Mucosa of descending colon (tissue), 3 donors: ENCODE measurements at regions of chr2 and their contacts with region 1.

Region 1: DNA sequence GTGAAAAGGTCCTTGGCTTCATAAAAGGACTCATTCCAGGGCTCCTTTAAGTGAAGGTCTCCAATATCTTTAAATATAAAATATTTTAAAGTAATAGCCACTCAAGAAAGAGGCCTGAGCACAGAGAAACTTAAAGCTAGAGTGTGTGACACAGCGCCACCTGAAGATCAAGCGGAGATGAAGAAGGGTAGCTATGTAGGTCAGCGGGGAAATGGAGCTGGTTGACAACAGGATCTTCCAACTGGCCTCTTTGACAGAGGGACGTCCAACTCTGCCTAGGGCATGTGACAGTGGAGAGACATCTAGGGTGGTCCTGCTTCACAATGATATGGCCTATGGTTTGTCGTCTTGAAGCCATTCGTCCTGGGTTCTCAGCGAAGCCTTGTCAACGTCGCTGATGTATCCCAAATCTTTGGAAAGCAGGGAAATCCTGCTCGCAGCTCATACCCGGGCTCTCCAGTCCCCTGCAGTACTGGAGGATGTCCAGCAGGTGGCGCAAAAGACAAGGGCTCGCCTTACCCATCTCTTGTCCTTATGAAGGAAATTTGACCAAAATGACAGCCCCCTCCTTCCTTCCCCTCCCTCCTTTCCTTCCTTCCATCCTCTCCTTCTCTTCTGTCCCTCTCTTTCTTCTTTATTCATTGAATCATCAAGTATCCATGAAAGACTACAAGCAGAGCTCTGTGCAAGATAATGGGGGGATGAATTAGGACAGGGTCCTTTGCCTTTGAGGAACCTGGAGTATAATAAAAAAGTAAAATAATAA is 59.6 kb downstream of the LONRF2 start:
- DNase-seq: peak; percentile 65 to 67 (median 66)
- ATAC-seq: peak; percentile 76
- H3K4me3 ChIP-seq: no peak overlapping the region
- H3K4me1 ChIP-seq: no peaks in the 10 kb centered on the region
- CTCF ChIP-seq: peak; percentile 97

Region 2: GRCh38 chr2:100142393-100142792 is 120.3 kb before region 1 on chr2 and contains the start of gene AFF3:
- intact Hi-C with region 1: no loop called
- DNase-seq: peak in 1 of 3 donors; percentile 31
- ATAC-seq: peak; percentile 78
- H3K4me3 ChIP-seq: no peak within 1 kb of the TSS
- H3K4me1 ChIP-seq: no peaks in the 10 kb centered on the region
- CTCF ChIP-seq: no peak
- total RNA-seq, gene AFF3: 4.2 to 56.6 (median 5.2) TPM

Region 3: GRCh38 chr2:100381240-100381639 is 118.5 kb after region 1 on chr2:
- intact Hi-C with region 1: loop called (anchors 5 kb)
- DNase-seq: peak in 2 of 3 donors; percentile 58 to 79
- ATAC-seq: peak; percentile 64
- H3K4me3 ChIP-seq: no peak overlapping the region
- H3K4me1 ChIP-seq: no peaks in the 10 kb centered on the region
- CTCF ChIP-seq: peak; percentile 66

Region 4: DNA sequence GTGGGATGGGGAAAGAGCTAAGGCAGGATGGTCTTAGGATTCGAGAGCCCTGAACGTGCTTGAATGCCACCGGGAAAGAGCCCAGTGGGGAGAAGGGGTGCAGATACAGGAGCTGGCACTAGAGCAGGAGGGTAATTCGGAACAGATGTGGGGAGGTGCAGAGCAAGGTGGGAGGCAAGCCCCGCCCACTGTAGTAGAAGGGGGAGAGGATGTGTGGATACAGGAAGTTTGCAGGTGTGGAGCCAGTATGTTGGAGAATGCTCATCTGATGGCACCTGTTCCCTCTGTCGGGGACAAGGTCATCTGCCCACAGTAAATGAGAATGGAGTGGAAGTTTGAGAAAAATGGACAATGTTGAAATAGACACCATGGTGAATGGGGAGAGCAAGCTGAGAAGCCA is 126.0 kb after region 1 on chr2:
- intact Hi-C with region 1: loop called (anchors 5 kb)
- DNase-seq: no peak
- ATAC-seq: no peak
- H3K4me3 ChIP-seq: no peak overlapping the region
- H3K4me1 ChIP-seq: no peaks in the 10 kb centered on the region
- CTCF ChIP-seq: no peak